Sciatic nerve (tissue), 2 donors: ENCODE measurements at regions of chr3 and their contacts with region 1.

Region 1: DNA sequence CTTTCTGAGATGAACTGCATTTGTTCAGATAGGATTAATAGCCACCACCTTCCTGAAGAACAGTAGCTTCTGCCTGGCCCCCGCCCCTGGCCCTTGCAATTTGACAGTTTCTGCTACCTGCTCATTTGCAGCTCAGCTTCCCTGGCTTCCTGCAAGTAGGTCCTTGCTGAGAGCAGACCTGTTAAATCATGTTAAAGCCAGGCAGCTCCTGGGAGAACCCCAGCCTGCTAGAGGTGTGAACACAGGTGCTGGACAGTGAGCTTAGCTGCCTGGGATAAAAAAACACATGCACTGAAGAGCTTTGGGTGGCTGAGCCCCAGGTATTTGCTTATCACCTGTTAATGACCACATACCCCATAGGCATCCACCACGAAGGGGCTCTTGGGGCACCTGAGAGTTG is 143.4 kb downstream of the PTPRG start:
- DNase-seq: no peak
- ATAC-seq: no peak

Region 2: GRCh38 chr3:61371123-61371522 is 333.7 kb before region 1 on chr3:
- intact Hi-C with region 1: loop called (anchors 5 kb)
- DNase-seq: no peak
- ATAC-seq: no peak